ENCODE measurements at regions of chr4 and their contacts with region 1.

Region 1: DNA sequence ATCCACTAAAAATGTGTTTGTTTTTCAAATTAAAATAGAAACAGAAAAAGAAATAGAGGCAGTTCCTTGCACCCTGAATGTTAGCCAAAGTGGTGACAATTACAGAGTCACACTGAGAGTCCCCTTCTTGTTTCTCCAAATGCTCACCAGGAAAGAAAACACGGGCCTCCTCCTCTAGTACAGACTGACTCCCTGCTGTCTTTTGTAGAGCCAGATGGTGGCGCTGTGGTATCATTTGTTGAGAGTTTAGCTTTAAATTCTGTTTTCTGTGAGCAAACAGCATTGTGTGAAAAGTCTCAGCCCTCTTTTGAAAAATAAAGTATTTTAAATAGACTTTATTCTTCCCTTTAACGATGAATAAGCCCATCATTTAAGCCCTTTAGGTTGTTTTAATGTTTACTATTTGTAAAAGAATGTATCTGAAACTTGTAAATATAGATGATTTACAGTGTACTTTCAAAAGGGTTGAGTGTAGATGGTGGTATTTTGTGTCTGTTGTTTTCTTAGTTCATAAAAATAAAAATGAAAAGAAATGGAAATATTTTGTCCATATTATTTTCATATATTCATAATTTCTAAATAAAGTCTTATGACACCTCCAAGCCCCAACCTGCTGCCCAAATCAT is 36.9 kb upstream of the ATOH1 start:
- DNase-seq: peak; percentile 45
- CTCF ChIP-seq: peak; percentile 88

Region 2: DNA sequence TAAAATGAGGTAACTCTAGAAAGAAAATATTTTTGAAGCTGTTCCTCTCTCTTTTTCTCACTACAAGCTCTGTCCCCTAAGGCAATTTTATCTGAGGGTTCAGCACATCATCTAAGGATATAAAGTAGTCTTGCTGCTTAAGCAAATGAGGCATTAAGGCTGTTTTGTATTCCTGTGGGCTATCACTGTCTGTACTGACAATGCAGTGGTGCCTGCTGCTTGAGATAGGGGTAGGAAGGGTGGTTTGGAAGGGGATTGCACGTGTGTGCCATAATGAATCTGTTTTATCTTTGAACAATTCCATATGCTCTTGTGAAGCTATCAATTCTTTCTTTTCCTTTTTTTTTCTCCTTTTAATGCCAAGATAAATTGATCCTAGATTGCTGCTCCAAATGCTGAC is 91.1 kb before region 1 on chr4:
- in situ Hi-C with region 1: no loop called
- DNase-seq: no peak
- CTCF ChIP-seq: no peak

Region 3: DNA sequence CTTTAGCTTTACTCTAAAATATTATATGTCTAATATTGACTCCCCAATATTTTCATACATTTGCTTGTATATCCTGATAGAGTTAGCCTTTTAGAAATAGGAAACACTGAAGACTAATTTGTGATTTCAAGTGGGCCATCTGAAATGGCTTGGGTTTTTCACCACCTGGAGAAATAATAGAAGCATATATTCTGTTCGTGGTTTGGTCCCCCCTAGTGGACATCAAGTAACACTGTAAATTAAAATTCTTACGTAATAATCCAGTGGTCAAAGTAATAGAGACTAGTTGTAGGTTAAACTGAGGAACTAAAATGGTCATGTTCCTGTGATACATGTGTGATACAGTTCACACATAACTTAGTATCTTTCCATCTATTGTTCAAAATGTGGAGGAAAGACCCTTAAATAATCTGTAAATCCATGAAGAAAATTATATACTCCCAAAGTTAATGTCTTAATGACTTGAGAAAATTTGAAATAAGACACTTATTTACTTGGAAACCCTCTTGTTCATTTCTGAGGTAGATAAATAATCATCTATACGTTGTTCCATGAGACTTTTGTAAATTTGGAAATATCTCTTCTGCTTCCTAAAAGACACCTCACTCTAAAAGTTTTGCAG is 336.1 kb after region 1 on chr4:
- in situ Hi-C with region 1: loop called (anchors 25 kb)
- DNase-seq: peak; percentile 25
- CTCF ChIP-seq: peak; percentile 49

Region 4: DNA sequence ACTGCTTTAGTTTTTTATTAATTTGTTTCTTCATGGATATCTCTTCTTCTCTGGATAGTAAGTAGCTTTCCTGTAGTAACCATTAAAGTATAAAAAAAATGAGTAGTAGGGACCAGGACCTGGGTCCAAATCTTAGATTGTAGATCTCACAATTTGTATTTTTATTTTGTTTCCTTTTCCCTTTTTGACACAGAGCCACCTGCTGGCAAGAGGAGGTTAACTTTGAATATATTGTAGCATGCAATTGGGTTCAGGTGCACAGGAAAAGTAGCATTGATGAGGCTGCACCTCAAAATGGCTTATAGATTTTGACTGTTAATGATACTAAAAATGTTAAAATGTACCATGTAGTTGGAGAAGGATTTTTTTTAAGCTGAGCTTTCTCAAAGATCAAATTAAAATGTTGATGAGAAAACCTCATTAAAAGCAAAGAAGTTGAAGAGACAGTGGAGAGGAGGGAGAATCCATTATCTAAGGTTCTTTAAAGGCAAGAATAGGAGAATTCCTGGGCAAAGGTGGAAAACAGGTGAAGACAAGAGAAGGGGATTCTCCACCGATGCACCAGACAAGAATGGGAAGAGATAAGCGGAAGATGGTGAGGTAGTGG is 599.2 kb after region 1 on chr4:
- in situ Hi-C with region 1: loop called (anchors 25 kb)
- DNase-seq: peak; percentile 26
- CTCF ChIP-seq: peak; percentile 59

Region 5: GRCh38 chr4:94595879-94596483 is 804.3 kb after region 1 on chr4:
- in situ Hi-C with region 1: loop called (anchors 25 kb)
- DNase-seq: peak; percentile 45
- CTCF ChIP-seq: peak; percentile 65